ENCODE measurements at regions of chr4 and their contacts with region 1.

Region 1: GRCh38 chr4:122922877-122923511 is 597 bp upstream of the NUDT6 start:
- DNase-seq: peak; percentile 60 to 87 (median 82)
- ATAC-seq: peak; percentile 98
- H3K4me3 ChIP-seq: peak overlapping the region; percentile 97
- H3K4me3 Mint-ChIP-seq: peak overlapping the region in 6 of 10 donors; percentile 98 to 100 (median 98)
- H3K27ac ChIP-seq: peak overlapping the region; percentile 68
- H3K27ac Mint-ChIP-seq: peak overlapping the region in 8 of 9 donors; percentile 92 to 98 (median 96)
- H3K4me1 ChIP-seq: peaks cover 11 to 12% of the 10 kb centered on the region in 2 donors
- H3K4me1 Mint-ChIP-seq: peaks cover 0 to 33% (median 7%) of the 10 kb centered on the region in 7 donors
- H3K27me3 ChIP-seq: no peaks in the 10 kb centered on the region
- H3K27me3 Mint-ChIP-seq: no peaks in the 10 kb centered on the region

Region 2: GRCh38 chr4:121139533-121140222 is 1783.3 kb before region 1 on chr4:
- CTCF ChIA-PET with region 1: no interaction called
- POLR2A ChIA-PET with region 1: no interaction called
- intact Hi-C with region 1: loop called in 1 of 2 experiments (anchors 10 kb)
- DNase-seq: peak in 7 of 9 donors; percentile 40 to 77 (median 70)
- ATAC-seq: peak; percentile 85
- H3K4me3 ChIP-seq: no peak overlapping the region
- H3K4me3 Mint-ChIP-seq: peak overlapping the region; percentile 10 to 75 (median 44)
- H3K27ac ChIP-seq: peak overlapping the region; percentile 62
- H3K27ac Mint-ChIP-seq: peak overlapping the region; percentile 74 to 97 (median 91)
- H3K4me1 ChIP-seq: peaks cover 0 to 29% of the 10 kb centered on the region in 2 donors
- H3K4me1 Mint-ChIP-seq: peaks cover 22 to 65% (median 54%) of the 10 kb centered on the region in 7 donors
- H3K27me3 ChIP-seq: no peaks in the 10 kb centered on the region
- H3K27me3 Mint-ChIP-seq: no peaks in the 10 kb centered on the region

Region 3: DNA sequence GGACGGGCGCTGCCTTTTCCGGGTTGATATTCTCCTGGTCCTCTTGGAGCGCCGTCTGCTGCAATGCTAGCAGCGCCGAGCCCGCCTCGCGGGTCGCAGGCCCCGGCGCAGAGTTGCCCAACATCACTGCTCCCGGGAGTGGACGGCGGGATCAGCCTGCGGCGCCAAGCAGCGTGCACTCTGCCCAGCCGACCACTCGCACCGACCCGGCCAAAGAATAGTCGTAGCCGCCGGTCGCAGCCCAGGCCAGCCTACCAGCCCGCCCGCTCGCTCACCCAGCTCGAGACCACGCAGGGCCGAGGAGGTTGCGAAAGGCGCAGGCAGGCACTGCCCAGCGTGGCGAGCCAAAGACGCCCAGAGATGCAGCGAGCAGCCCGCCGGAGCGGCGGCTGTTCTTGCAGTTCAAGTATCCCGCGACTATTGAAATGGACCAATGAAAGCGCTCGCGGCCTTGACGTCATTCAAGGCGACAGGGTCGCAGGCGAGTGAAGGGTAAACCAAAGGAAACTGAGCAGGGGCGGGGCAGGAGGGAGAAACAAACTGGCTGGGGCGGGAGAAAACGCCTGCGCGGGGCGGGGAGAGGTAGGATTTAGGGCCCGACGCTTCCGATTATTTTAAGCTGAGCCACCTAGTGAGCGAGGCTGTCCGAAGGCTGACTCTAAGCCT is 1099.4 kb before region 1 on chr4 and contains the start of gene CCNA2:
- CTCF ChIA-PET with region 1: no interaction called
- POLR2A ChIA-PET with region 1: no interaction called
- intact Hi-C with region 1: loop called (anchors 1 kb)
- DNase-seq: peak; percentile 86 to 95 (median 93)
- ATAC-seq: peak; percentile 99
- H3K4me3 ChIP-seq: peak within 1 kb of the TSS; percentile 85
- H3K4me3 Mint-ChIP-seq: peak within 1 kb of the TSS; percentile 85 to 100 (median 92)
- H3K27ac ChIP-seq: peak within 1 kb of the TSS; percentile 60
- H3K27ac Mint-ChIP-seq: peak within 1 kb of the TSS; percentile 72 to 97 (median 93)
- H3K4me1 ChIP-seq: peaks cover 0 to 9% of the 10 kb centered on the region in 2 donors
- H3K4me1 Mint-ChIP-seq: peaks cover 4 to 44% (median 12%) of the 10 kb centered on the region in 7 donors
- H3K27me3 ChIP-seq: no peaks in the 10 kb centered on the region
- H3K27me3 Mint-ChIP-seq: peaks cover 0 to 3% (median 0%) of the 10 kb centered on the region in 5 donors
- total RNA-seq, gene CCNA2: 0.24 to 63.7 (median 1.2) TPM

Region 4: DNA sequence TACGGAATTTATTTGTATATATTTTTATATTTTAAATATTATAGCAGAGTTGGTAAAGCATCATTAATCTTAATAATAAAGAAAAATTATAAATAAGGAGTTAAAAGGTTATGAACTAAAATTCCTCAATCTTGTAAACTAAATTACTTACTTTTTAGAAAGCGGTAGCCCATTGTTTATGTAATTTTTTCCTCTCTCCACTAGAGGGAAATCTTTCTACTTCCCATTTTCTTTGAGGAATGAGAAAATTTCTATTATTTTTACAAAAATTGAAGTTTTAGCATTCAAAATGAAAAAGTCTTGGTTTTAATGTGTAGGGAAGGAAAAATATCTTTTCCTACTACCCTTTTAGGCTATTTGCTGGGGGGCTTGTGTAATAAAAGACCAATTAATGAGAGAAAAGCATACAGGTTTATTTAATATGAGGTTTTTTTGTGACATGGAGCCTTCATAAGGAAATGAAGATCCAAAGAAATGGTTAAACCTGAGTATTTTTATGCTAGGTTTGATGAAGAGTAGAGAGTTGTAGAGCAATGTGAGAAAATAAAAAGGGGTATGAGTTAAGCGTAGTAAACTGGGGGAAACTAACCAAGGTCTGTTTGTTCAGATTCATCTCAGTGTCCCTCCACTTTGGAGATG is 612.9 kb before region 1 on chr4:
- CTCF ChIA-PET with region 1: no interaction called
- POLR2A ChIA-PET with region 1: no interaction called
- intact Hi-C with region 1: loop called in 1 of 2 experiments (anchors 10 kb)
- DNase-seq: peak in 3 of 9 donors; percentile 2 to 8 (median 7)
- ATAC-seq: no peak
- H3K4me3 ChIP-seq: no peak overlapping the region
- H3K4me3 Mint-ChIP-seq: no peak overlapping the region
- H3K27ac ChIP-seq: no peak overlapping the region
- H3K27ac Mint-ChIP-seq: no peak overlapping the region
- H3K4me1 ChIP-seq: no peaks in the 10 kb centered on the region
- H3K4me1 Mint-ChIP-seq: peaks cover 0 to 4% (median 0%) of the 10 kb centered on the region in 7 donors
- H3K27me3 ChIP-seq: no peaks in the 10 kb centered on the region
- H3K27me3 Mint-ChIP-seq: no peaks in the 10 kb centered on the region

Region 5: GRCh38 chr4:122666527-122667245 is 256.3 kb before region 1 on chr4:
- CTCF ChIA-PET with region 1: no interaction called
- POLR2A ChIA-PET with region 1: no interaction called
- intact Hi-C with region 1: loop called in 1 of 2 experiments (anchors 5 kb)
- DNase-seq: peak in 2 of 9 donors; percentile 0 to 12
- ATAC-seq: peak; percentile 32
- H3K4me3 ChIP-seq: no peak overlapping the region
- H3K4me3 Mint-ChIP-seq: peak overlapping the region in 1 of 10 donors; percentile 60
- H3K27ac ChIP-seq: no peak overlapping the region
- H3K27ac Mint-ChIP-seq: peak overlapping the region in 4 of 9 donors; percentile 28 to 79 (median 66)
- H3K4me1 ChIP-seq: peaks cover 0 to 3% of the 10 kb centered on the region in 2 donors
- H3K4me1 Mint-ChIP-seq: peaks cover 13 to 75% (median 31%) of the 10 kb centered on the region in 7 donors
- H3K27me3 ChIP-seq: no peaks in the 10 kb centered on the region
- H3K27me3 Mint-ChIP-seq: no peaks in the 10 kb centered on the region

Region 6: DNA sequence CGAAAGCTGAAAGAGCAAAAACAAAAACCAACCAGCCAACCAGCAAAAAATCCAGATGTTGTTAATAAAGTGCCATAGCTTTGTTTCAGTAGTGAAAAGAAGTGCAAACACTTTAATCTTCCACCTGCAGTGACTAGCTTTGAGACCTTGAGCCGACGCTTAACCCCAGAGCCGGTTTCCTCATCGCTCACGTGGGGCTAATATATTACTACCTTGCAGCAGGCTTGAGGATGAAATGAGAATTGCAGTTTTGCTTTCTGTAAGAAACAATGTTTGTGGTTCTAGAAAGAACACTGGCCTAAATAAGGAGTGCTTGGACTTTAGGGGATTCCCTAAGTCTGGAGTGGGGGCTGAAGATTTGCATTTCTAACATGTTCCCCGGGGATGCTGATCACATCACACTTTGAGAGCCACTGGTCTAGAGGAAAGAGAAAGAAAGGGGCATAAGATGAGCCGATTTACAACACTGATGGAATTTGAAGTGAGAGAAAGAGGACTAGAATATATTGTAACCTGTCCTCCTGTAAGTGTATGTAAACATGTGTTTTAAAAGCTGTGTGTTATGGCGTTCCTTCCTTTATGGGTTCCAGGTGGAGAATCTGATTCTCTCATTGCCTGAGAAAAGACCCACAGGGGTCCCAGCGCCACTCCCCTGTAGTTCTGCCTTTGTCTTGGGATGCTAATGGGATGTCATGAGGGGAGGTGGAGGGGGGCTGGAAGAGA is 95.0 kb before region 1 on chr4:
- CTCF ChIA-PET with region 1: no interaction called
- POLR2A ChIA-PET with region 1: no interaction called
- intact Hi-C with region 1: loop called (anchors 2 to 5 kb)
- DNase-seq: peak in 7 of 9 donors; percentile 9 to 40 (median 27)
- ATAC-seq: peak; percentile 81
- H3K4me3 ChIP-seq: peak overlapping the region; percentile 44
- H3K4me3 Mint-ChIP-seq: peak overlapping the region; percentile 74 to 86 (median 84)
- H3K27ac ChIP-seq: no peak overlapping the region
- H3K27ac Mint-ChIP-seq: peak overlapping the region in 1 of 9 donors; percentile 27
- H3K4me1 ChIP-seq: peaks cover 5 to 8% of the 10 kb centered on the region in 2 donors
- H3K4me1 Mint-ChIP-seq: peaks cover 7 to 22% (median 11%) of the 10 kb centered on the region in 7 donors
- H3K27me3 ChIP-seq: peaks cover 10 to 16% of the 10 kb centered on the region in 2 donors
- H3K27me3 Mint-ChIP-seq: peaks cover 71 to 81% (median 80%) of the 10 kb centered on the region in 5 donors

Region 7: DNA sequence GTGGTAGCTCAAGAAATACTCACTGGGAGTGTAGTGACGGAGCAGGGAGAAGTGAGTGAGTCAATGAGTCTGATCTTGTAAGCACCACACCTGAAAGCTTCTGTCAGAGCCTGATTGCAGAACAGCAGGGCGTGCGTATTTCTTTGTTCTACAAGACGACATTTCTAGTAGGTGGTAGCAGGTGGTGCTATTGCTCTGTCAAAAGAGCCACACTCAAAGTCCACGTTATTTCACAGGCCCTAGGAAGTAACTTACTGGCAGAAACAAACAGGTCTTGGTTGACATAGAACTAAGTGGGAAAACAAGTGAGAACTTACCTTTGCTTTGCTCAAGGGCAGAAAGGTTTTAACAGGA is 427.2 kb after region 1 on chr4:
- CTCF ChIA-PET with region 1: no interaction called
- POLR2A ChIA-PET with region 1: no interaction called
- intact Hi-C with region 1: no loop called
- DNase-seq: no peak
- ATAC-seq: no peak
- H3K4me3 ChIP-seq: no peak overlapping the region
- H3K4me3 Mint-ChIP-seq: no peak overlapping the region
- H3K27ac ChIP-seq: no peak overlapping the region
- H3K27ac Mint-ChIP-seq: no peak overlapping the region
- H3K4me1 ChIP-seq: no peaks in the 10 kb centered on the region
- H3K4me1 Mint-ChIP-seq: peaks cover 0 to 13% (median 4%) of the 10 kb centered on the region in 7 donors
- H3K27me3 ChIP-seq: no peaks in the 10 kb centered on the region
- H3K27me3 Mint-ChIP-seq: peaks cover 3 to 36% (median 4%) of the 10 kb centered on the region in 5 donors